Activated CD8-positive, alpha-beta T cell treated with anti-CD3 and anti-CD28 coated beads, Interleukin-2, amount 10 ng/mL, durations not matched to agents 7 days and 5 days (primary cell): ENCODE measurements at regions of chr22 and their contacts with region 1.

Region 1: DNA sequence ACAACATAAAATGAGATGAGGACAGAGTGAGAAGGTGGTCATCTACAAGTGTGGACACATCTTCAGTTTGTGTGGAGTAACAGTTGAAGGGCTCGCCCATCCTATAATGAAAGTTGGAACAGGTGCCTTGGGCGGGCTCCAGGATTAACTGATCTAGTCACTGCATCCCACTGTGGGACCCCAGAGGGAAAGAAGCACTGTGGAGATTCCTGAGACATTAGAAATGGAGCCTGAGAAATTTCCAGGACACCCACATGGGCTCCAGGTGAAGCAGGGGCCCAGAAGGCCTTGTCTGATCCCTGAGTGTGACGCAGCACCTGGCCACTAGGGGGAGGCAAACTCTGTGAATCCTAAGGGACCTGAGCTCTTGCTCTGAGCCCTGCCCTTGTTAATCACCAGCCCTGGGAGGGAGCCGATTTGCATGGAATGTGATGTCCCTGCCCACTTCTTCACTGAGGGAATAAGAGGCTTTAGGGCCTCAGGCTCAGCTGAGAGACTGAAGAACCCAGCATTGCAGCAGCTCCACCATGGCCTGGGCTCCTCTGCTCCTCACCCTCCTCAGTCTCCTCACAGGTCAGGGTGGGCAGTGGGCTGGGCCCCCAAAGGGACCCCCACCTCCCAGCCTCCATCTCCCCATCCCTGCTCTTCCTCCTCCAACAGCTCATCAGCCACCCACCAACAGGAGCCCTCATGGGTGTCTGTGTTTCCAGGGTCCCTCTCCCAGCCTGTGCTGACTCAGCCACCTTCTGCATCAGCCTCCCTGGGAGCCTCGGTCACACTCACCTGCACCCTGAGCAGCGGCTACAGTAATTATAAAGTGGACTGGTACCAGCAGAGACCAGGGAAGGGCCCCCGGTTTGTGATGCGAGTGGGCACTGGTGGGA is 98.4 kb downstream of the VPREB1 start:
- DNase-seq: peak; percentile 77
- ATAC-seq: peak; percentile 79
- H3K4me3 Mint-ChIP-seq: no peak overlapping the region
- H3K27ac Mint-ChIP-seq: no peak overlapping the region
- H3K4me1 Mint-ChIP-seq: peaks cover 19% of the 10 kb centered on the region
- H3K27me3 Mint-ChIP-seq: peaks cover 26% of the 10 kb centered on the region

Region 2: GRCh38 chr22:22329792-22330191 is 13.1 kb before region 1 on chr22:
- CTCF ChIA-PET with region 1: interaction called, 18 read pairs
- POLR2A ChIA-PET with region 1: no interaction called
- DNase-seq: no peak
- ATAC-seq: no peak
- H3K4me3 Mint-ChIP-seq: no peak overlapping the region
- H3K27ac Mint-ChIP-seq: no peak overlapping the region
- H3K4me1 Mint-ChIP-seq: peaks cover 6% of the 10 kb centered on the region
- H3K27me3 Mint-ChIP-seq: peaks cover 39% of the 10 kb centered on the region

Region 3: GRCh38 chr22:22357024-22357883 is 14.3 kb after region 1 on chr22:
- CTCF ChIA-PET with region 1: interaction called, 18 read pairs
- POLR2A ChIA-PET with region 1: no interaction called
- DNase-seq: peak; percentile 89
- ATAC-seq: peak; percentile 98
- H3K4me3 Mint-ChIP-seq: no peak overlapping the region
- H3K27ac Mint-ChIP-seq: no peak overlapping the region
- H3K4me1 Mint-ChIP-seq: peaks cover 3% of the 10 kb centered on the region
- H3K27me3 Mint-ChIP-seq: peaks cover 31% of the 10 kb centered on the region

Region 4: GRCh38 chr22:22422629-22423112 is 79.7 kb after region 1 on chr22:
- CTCF ChIA-PET with region 1: interaction called, 10 read pairs
- POLR2A ChIA-PET with region 1: no interaction called
- DNase-seq: peak; percentile 83
- ATAC-seq: peak; percentile 81
- H3K4me3 Mint-ChIP-seq: no peak overlapping the region
- H3K27ac Mint-ChIP-seq: no peak overlapping the region
- H3K4me1 Mint-ChIP-seq: no peaks in the 10 kb centered on the region
- H3K27me3 Mint-ChIP-seq: peaks cover 17% of the 10 kb centered on the region